ENCODE measurements at regions of chr16 and their contacts with region 1.

Region 1: GRCh38 chr16:11639925-11640899 is 28.0 kb upstream of the SNN start:
- DNase-seq: no peak
- H3K4me3 Mint-ChIP-seq: no peak overlapping the region
- H3K27ac Mint-ChIP-seq: no peak overlapping the region
- H3K4me1 Mint-ChIP-seq: peaks cover 10% of the 10 kb centered on the region
- H3K27me3 Mint-ChIP-seq: peaks cover 8% of the 10 kb centered on the region

Region 2: DNA sequence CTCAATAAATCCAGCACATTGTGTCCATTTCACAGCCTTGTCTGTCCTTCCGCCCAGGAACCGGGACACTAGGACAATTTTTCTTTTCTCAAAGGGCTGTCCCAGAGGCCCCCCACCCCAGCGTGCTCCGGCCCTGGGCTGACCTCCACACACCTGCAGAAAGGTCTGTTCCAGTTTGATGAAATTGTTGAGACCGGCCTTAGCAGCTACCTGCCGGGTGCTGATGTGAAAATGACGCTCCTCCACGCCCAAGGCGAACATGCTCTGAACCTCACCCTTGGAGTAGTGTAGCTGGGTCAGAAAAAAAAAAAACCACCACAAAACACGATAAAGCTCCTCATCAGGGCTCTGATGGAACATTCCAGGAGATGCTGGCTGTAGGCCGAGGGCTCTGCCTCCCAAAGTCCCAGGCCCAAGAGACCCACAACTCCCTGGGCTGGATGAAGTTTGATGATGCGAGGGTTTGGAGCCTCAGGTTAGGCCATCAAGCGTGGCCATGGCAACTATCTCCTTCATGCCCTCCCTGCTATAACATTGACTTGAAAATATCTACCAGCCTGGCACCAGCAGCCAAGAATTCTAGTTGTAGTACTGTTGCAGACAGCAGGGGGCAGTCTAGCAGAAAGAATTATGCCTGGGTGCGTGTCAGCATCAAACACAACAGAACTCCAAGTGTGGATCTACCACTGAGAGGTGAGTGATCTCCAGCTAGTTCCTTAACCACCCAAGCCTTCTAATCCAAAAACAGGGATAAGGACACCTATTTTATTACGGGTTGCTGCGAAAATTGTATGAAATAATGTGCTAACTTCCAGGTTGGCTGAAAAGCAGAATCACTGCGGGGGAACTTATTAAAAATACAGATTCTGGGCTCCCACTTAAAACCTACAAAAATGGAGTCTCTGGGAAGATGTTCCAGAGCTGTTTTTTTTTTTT is 232.9 kb before region 1 on chr16:
- intact Hi-C with region 1: loop called (anchors 5 kb)
- DNase-seq: peak; percentile 52
- H3K4me3 Mint-ChIP-seq: no peak overlapping the region
- H3K27ac Mint-ChIP-seq: no peak overlapping the region
- H3K4me1 Mint-ChIP-seq: peaks cover 3% of the 10 kb centered on the region
- H3K27me3 Mint-ChIP-seq: peaks cover 3% of the 10 kb centered on the region